ENCODE measurements at regions of chr9 and their contacts with region 1.

Region 1: DNA sequence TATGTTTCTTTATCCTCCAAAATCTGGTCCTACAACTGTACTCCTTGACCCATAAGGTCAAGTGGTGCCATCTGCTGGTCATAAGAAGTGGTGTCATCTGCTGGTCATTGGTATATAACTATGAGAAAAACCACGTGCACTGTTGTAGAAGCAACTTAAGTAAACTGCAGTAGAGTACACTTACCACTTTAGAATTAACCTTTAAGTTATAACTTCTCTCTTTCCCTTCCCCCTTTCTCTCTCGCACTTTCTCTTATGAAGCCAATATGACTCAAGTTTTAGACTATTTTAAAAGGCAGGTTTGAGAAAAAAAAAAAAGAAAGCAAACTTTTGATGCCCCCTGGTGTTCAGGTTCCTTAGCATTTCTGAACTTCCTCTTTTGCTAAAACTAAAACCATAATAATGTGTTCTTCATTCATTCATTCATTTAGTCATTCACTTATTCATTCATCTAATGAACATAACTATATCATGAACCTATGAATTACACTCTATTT is 12.8 kb upstream of the MTAP start:
- DNase-seq: peak; percentile 73
- H3K4me3 ChIP-seq: peak overlapping the region; percentile 31
- H3K27ac ChIP-seq: no peak overlapping the region
- H3K27me3 ChIP-seq: no peaks in the 10 kb centered on the region
- CTCF ChIP-seq: peak; percentile 73

Region 2: DNA sequence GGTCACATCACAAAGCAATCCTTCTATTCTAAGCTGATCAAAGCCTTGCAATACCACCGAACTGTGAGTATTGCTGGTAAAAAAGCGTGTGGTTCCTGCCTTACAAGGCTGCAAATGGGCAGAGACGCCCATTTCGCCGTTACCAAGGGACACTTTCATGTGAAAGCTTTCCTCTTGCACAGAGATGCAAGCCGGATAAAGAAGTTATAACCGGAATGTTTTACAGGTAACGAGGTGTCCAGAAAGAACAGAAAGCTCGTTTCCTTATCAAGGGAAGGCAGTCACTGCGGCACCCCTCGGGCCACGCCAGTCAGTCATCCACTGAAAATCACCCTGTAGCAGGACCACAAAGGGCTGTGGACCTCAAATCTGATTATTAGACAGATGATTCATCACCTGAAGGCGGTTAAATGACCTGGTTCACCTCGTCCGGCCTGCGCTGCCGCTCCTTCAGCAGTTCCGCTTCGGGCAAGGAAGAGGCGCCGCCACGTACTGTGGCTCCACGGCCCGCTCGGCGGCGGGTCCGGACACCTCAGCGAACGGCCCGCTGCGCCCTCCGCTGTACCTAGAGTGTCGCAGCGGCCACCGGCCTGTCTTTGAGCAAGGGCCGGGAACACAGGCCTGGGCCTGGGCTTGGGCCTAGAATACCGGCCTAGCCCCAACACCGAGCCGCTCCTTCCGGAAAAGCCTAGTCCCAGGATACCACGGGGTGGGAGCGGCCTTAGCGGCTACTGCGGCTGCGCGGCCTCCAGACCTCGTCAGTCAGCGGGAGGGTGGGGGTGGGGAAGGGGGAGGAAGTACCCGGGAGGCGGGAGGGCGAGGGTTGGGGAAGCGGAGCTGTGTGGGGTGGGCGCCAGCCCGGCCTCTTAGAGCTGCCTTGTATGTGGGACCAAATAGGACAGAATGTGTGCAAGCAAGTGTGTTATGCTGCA is 454.6 kb before region 1 on chr9 and contains the start of gene KLHL9:
- in situ Hi-C with region 1: no loop called
- DNase-seq: peak; percentile 87
- H3K4me3 ChIP-seq: peak within 1 kb of the TSS; percentile 75
- H3K27ac ChIP-seq: peak within 1 kb of the TSS; percentile 90
- H3K27me3 ChIP-seq: no peaks in the 10 kb centered on the region
- CTCF ChIP-seq: no peak

Region 3: DNA sequence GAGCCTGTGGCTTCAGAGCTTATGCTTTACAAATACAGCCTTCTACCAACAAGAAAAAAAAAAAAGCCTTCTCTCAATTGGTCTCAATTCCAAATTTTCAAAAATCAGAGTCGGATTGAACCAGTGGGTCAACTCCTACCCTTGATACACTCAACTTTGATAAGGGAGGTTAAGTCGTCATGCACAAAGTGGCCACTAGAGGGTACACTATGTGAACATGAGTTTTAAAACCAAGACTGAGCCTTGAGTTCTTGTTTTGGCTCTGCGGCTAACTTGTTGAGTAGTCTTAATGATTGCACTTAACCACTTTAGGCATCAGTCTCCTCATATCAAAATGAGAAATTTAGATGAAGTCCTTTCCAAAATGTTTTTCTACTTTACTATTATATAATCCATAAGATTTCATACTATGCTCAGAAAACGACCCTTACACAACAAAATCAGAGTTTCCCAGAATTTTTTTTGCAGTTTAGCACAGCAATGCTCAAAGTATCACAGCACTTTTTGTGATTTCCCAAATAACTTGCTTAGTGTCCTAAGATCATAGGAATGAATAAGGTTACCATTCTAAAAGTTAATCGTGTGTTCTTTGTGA is 80.0 kb before region 1 on chr9:
- in situ Hi-C with region 1: loop called (anchors 10 kb)
- DNase-seq: peak; percentile 64
- H3K4me3 ChIP-seq: no peak overlapping the region
- H3K27ac ChIP-seq: no peak overlapping the region
- H3K27me3 ChIP-seq: no peaks in the 10 kb centered on the region
- CTCF ChIP-seq: peak; percentile 82

Measured in brain microvascular endothelial cell (primary cell).